Mammary epithelial cell (primary cell): ENCODE measurements at regions of chr19 and their contacts with region 1.

Region 1: GRCh38 chr19:3275583-3276340 is 51.3 kb downstream of the CELF5 start:
- DNase-seq: peak; percentile 83
- H3K4me3 ChIP-seq: peak overlapping the region; percentile 35 to 60 (median 52)
- H3K27ac ChIP-seq: no peak overlapping the region
- H3K4me1 ChIP-seq: peaks cover 9% of the 10 kb centered on the region
- H3K27me3 ChIP-seq: no peaks in the 10 kb centered on the region
- CTCF ChIP-seq: no peak

Region 2: DNA sequence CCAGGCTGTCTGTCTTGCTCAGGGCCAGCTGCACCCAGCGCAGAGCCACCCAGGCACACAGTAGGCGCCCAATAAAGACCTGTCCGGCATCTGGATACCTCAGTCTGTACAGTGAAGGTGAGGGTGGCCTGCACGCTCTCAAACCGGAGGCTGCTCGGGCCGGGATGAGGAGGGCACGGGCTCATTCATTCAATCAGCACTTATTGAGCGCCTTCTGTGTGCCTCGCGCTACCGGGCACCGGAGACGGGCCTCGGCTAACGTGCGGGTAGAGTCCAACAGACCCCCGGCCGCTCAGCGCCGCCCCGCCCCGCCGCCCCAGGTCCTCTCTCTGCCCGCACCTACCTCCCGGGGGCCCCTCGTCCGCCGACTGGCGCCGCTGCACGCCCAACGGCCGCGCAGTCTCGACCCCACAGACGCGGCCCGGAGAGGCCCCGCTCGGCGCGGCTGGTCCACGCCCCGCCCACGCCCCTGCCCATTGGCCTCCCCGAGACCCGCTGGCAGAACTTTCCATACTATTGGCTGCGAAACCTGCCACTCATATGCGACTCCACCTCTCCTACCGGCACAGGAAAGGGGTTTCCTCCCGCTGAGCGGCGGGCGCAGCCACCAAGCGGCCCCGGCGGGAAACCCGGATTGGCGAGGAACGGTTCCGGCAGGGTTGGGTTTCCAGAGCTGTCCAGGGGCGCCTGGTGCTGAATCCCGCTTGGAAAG is 536.0 kb before region 1 on chr19 and contains the start of gene SLC39A3:
- CTCF ChIA-PET with region 1: no interaction called
- dilution Hi-C with region 1: loop called (anchors 10 kb)
- in situ Hi-C with region 1: no loop called
- intact Hi-C with region 1: no loop called
- DNase-seq: peak; percentile 96
- H3K4me3 ChIP-seq: peak within 1 kb of the TSS; percentile 88 to 92 (median 92)
- H3K27ac ChIP-seq: no peak within 1 kb of the TSS
- H3K4me1 ChIP-seq: no peaks in the 10 kb centered on the region
- H3K27me3 ChIP-seq: no peaks in the 10 kb centered on the region
- CTCF ChIP-seq: peak in 1 of 2 donors; percentile 26
- total RNA-seq, gene SLC39A3: 32.6 to 34.7 TPM

Region 3: GRCh38 chr19:2887391-2887914 is 388.3 kb before region 1 on chr19:
- CTCF ChIA-PET with region 1: no interaction called
- dilution Hi-C with region 1: no loop called
- in situ Hi-C with region 1: no loop called
- intact Hi-C with region 1: loop called (anchors 5 kb)
- DNase-seq: peak; percentile 66
- H3K4me3 ChIP-seq: peak overlapping the region in 2 of 3 experiments; percentile 19 to 35
- H3K27ac ChIP-seq: no peak overlapping the region
- H3K4me1 ChIP-seq: no peaks in the 10 kb centered on the region
- H3K27me3 ChIP-seq: no peaks in the 10 kb centered on the region
- CTCF ChIP-seq: peak; percentile 66 to 68

Region 4: DNA sequence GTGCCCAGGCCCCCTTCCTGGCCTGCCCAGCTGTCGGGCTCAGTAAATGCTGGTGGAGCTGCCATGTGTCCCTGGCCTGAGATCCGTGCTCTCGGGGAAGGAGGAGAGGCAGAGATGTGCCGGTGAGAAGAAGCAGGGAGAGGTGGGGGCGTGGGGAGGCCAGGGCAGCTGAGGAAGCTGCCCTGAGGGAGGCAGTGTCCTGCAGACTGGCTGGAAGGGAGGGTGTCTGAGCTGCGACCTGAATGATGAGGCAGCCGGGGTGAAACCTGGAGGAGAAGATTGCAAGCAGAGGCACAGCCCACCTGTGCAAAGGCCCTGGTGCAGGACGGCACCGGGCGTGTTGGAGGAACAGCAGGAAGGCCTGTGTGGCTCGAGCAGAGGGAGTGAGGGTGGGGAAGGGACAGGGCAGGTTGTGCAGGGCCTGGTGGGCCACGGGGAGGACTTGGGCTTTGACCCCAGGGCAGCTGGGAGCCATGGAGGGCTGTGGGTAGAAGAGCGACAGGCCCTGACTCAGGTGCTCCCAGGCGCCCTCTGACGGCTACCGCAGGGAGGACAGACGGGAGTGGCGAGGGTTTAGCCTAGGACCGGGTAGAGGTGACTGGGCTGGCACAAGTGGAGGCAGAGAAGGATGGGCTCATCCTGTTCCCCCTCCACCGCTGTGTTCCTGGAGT is 65.3 kb before region 1 on chr19:
- CTCF ChIA-PET with region 1: no interaction called
- dilution Hi-C with region 1: loop called (anchors 5 kb)
- in situ Hi-C with region 1: no loop called
- intact Hi-C with region 1: no loop called
- DNase-seq: peak; percentile 19
- H3K4me3 ChIP-seq: no peak overlapping the region
- H3K27ac ChIP-seq: no peak overlapping the region
- H3K4me1 ChIP-seq: no peaks in the 10 kb centered on the region
- H3K27me3 ChIP-seq: no peaks in the 10 kb centered on the region
- CTCF ChIP-seq: peak; percentile 49 to 75

Region 5: DNA sequence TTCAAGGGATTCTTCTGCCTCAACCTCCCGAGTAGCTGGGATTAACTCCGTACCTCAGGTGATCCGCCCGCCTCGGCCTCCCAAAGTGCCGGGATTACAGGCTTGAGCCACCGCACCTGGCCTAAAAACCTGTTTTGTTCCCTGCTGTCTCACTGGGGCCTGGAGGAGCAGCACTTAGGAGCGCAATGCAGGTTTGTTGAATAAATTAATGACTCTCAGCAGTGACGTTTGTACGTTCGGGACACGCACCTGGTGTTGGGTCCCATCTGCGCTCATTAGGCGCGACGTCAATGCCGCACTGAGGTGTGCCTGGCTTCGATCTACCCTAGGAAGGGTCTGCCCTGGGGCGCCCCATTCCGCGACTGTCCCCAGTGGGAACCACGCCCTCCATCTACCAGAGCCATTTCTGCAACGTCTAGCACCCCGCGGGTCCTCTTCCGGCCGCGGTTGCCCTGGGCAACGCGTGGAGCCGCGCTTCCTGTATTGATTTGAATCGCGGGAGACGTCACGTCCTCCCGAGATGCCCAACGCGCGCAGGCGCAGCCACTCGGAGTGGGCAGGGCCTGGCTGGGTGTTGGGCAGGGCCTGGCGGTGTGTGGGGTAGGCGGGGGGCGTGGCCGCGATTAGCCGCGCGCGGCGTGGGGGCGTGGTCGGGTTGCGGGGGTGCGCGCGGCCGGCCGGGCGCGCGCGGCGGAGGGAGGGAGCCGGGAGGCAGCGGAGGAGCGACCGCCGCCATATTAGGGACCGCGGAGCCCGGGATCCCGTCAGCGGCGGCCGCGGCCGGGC is 230.0 kb after region 1 on chr19 and contains the start of gene FZR1:
- CTCF ChIA-PET with region 1: interaction called, 47 read pairs
- dilution Hi-C with region 1: no loop called
- in situ Hi-C with region 1: no loop called
- intact Hi-C with region 1: no loop called
- DNase-seq: peak; percentile 98
- H3K4me3 ChIP-seq: peak within 1 kb of the TSS; percentile 84 to 86 (median 85)
- H3K27ac ChIP-seq: peak within 1 kb of the TSS; percentile 96
- H3K4me1 ChIP-seq: peaks cover 30% of the 10 kb centered on the region
- H3K27me3 ChIP-seq: no peaks in the 10 kb centered on the region
- CTCF ChIP-seq: no peak
- total RNA-seq, gene FZR1: 49.8 to 55.0 TPM

Region 6: DNA sequence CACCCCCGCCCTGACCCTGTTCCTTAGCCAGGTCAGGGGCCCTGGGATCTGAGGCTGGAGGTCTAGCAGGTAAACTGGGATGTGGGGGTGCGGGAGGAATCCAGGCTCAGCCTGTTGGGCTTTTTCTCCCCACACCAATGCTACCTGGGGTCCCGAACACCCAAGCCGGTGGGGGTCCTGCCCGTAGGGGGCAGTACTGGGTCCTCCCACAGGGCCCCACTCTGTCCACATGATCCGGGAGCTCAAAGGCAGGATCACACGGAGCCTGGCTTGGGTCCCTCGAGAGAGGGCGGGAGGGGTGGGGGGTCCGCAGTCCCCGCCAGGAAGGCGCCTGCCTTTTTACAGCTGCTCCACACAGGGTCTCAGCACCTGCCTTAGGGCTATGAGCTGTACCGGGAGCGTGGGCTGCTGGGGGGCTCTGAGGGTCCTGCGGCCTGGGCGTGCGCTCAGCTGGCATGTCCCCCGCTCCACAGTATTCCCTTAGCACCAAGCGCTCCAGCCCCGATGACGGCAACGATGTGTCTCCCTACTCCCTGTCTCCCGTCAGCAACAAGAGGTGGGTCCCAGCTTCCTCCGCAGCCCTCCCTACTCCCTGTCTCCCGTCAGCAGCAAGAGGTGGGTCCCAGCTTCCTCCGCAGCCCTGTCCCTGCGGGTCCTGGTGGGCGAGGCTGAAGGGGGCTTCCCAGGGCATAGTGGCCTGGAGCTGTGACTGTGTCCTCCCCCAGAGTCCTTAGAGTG is 250.9 kb after region 1 on chr19:
- CTCF ChIA-PET with region 1: no interaction called
- dilution Hi-C with region 1: no loop called
- in situ Hi-C with region 1: no loop called
- intact Hi-C with region 1: no loop called
- DNase-seq: no peak
- H3K4me3 ChIP-seq: no peak overlapping the region
- H3K27ac ChIP-seq: no peak overlapping the region
- H3K4me1 ChIP-seq: no peaks in the 10 kb centered on the region
- H3K27me3 ChIP-seq: no peaks in the 10 kb centered on the region
- CTCF ChIP-seq: no peak